A673 (cell line): ENCODE measurements at regions of chr7 and their contacts with region 1.

Region 1: DNA sequence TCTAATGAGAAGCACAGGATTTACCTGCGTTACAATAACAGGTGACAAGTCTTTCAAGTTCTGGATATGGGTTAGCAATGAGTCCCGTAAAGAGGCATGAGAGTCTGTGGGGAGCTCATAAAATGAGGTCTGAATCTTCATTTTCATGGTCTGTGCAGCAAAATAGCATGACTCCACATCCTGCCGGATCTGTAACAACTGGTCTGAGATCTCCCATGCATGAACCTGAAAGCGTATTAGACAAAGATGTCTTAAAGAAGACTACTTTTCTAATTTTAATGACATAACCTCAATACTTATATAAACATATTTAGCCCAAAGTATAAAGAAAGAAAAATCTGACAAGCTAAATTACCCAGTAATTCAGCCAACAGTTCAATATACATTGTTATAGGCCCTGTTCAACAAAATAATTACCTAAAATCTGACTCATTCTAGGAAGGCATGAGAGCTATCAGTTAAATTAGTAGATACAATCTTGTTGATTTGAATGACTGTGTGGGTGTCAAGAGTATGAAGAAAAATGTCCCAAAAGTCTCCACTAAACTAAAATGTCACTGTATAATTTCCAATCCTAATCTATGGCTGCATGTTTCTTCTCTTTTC is 36.9 kb downstream of the TNPO3 start:
- DNase-seq: no peak
- H3K4me3 ChIP-seq: no peak overlapping the region
- H3K27ac ChIP-seq: no peak overlapping the region
- H3K4me1 ChIP-seq: no peaks in the 10 kb centered on the region
- H3K27me3 ChIP-seq: no peaks in the 10 kb centered on the region
- CTCF ChIP-seq: no peak

Region 2: DNA sequence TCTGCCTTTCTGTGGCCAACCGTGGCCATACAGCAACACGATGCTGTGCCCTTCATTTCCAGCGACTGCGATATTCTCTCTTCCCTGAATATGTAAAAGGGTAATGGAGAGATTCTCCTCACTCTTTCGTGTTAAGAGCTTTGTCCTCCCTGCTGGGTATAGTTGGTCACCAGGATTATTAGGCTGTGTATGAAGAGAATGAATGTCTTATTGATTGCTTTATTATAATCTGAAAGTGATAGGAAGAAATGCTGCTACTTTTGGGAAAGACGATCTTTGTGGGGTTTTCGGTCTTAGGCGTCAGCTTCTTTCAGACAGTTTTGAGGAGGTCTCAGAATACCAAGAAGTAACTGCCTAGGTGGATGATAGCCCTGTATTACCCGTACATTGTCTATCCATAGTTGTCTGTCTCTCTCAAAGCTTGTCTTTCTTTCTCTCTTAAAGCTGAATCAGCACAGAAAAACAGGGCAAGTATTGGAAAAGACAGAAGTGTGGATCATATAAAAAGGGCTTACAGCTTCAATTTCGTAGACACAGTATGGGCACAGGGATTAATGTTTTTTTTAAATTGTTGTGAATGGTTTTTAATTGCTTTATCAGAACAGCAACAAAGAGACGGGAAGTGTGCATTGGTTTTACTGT is 208.0 kb after region 1 on chr7:
- CTCF ChIA-PET with region 1: no interaction called
- POLR2A ChIA-PET with region 1: no interaction called
- intact Hi-C with region 1: no loop called
- DNase-seq: peak; percentile 31
- H3K4me3 ChIP-seq: peak overlapping the region; percentile 81
- H3K27ac ChIP-seq: peak overlapping the region; percentile 70
- H3K4me1 ChIP-seq: peaks cover 8% of the 10 kb centered on the region
- H3K27me3 ChIP-seq: no peaks in the 10 kb centered on the region
- CTCF ChIP-seq: no peak

Region 3: GRCh38 chr7:129388333-129389098 is 370.5 kb after region 1 on chr7:
- CTCF ChIA-PET with region 1: interaction called, 17 read pairs
- POLR2A ChIA-PET with region 1: no interaction called
- intact Hi-C with region 1: no loop called
- DNase-seq: no peak
- H3K4me3 ChIP-seq: no peak overlapping the region
- H3K27ac ChIP-seq: no peak overlapping the region
- H3K4me1 ChIP-seq: peaks cover 18% of the 10 kb centered on the region
- H3K27me3 ChIP-seq: no peaks in the 10 kb centered on the region
- CTCF ChIP-seq: no peak